Caco-2 (cell line): ENCODE measurements at regions of chr2 and their contacts with region 1.

Region 1: GRCh38 chr2:217899231-217900009 is 103.4 kb downstream of the TNS1 start:
- DNase-seq: peak; percentile 50 to 54
- H3K4me3 ChIP-seq: no peak overlapping the region
- H3K4me3 Mint-ChIP-seq: no peak overlapping the region
- H3K27ac Mint-ChIP-seq: peak overlapping the region; percentile 62
- H3K4me1 ChIP-seq: peaks cover 65% of the 10 kb centered on the region
- H3K4me1 Mint-ChIP-seq: peaks cover 23% of the 10 kb centered on the region
- H3K27me3 ChIP-seq: no peaks in the 10 kb centered on the region
- H3K27me3 Mint-ChIP-seq: no peaks in the 10 kb centered on the region
- CTCF ChIP-seq: peak in 1 of 2 experiments; percentile 63

Region 2: GRCh38 chr2:217886720-217887309 is 12.6 kb before region 1 on chr2:
- CTCF ChIA-PET with region 1: interaction called, 4 read pairs
- POLR2A ChIA-PET with region 1: no interaction called
- intact Hi-C with region 1: loop called (anchors 2 kb)
- DNase-seq: peak; percentile 76 to 82
- H3K4me3 ChIP-seq: no peak overlapping the region
- H3K4me3 Mint-ChIP-seq: no peak overlapping the region
- H3K27ac Mint-ChIP-seq: no peak overlapping the region
- H3K4me1 ChIP-seq: no peaks in the 10 kb centered on the region
- H3K4me1 Mint-ChIP-seq: no peaks in the 10 kb centered on the region
- H3K27me3 ChIP-seq: no peaks in the 10 kb centered on the region
- H3K27me3 Mint-ChIP-seq: no peaks in the 10 kb centered on the region
- CTCF ChIP-seq: peak; percentile 83 to 87

Region 3: DNA sequence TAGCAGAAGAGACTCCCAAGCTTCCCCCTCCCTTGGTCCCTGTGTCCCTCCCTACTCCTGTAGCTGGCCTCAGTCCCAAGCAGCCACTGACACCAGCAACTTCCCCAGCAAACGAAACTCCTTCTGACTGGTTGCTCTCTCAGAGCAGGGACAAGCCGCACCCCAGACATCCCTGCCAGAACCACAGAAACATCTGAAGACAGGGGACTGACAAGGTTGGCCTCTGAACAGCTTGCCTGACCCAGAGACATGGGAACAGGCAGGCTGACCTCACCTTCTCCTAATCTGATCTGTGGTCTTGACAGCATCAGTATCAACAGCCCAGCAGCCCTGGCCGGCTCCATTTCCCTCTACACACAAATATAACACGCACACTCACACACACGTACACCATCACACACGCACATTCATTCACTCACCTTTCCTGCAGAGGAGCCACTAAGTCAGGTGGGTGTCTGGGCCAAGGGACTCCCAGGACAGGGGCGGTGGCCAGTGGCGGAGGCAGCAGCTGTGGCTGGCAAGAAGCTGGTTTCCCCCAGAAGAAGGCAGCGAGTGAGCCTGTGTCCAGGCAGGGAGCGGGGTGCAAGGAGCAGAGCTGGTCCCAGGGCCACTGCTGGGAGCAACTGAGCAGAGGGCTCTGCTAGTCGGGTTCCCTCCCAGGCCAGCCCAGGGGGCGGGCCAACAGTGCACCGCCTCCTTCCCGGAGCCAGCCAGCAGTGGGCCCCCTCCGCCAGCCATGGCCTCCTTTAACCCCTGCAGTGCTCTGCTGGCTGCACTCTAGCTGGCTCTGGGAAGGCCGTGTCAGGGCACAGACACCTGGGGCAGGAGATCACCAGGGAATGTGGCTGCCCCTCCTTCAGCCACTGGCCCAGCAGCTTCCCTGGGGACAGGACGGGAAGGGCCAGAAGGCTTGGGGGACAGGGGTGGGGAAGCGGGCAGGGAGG is 44.3 kb after region 1 on chr2:
- CTCF ChIA-PET with region 1: interaction called, 3 read pairs
- POLR2A ChIA-PET with region 1: no interaction called
- intact Hi-C with region 1: loop called (anchors 2 kb)
- DNase-seq: peak; percentile 88 to 89
- H3K4me3 ChIP-seq: peak overlapping the region; percentile 48
- H3K4me3 Mint-ChIP-seq: peak overlapping the region; percentile 52
- H3K27ac Mint-ChIP-seq: no peak overlapping the region
- H3K4me1 ChIP-seq: peaks cover 35% of the 10 kb centered on the region
- H3K4me1 Mint-ChIP-seq: peaks cover 27% of the 10 kb centered on the region
- H3K27me3 ChIP-seq: no peaks in the 10 kb centered on the region
- H3K27me3 Mint-ChIP-seq: no peaks in the 10 kb centered on the region
- CTCF ChIP-seq: peak in 1 of 2 experiments; percentile 81